ENCODE measurements at regions of chr6 and their contacts with region 1.

Region 1: DNA sequence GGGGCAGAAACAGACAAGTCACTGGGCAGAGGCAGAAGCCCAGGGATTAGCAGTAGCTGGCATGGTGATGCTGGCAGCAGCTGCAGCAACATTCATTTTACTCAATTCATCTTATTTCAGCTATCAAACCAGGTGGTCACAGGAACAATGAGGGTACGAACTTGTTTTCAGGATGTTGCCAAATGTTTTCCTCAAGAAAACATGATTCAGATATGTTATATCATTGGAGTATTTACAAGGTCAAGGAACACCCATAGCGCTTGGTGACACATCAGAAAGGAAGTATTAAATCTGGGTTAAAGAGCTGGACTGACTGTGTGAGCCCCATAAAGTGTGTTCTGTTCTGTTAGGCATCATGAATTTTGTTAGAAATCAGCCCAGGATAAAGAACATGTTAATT is 456.9 kb upstream of the ID4 start:
- DNase-seq: no peak
- ATAC-seq: no peak
- H3K4me3 Mint-ChIP-seq: no peak overlapping the region
- H3K27ac Mint-ChIP-seq: no peak overlapping the region
- H3K4me1 Mint-ChIP-seq: peaks cover 11% of the 10 kb centered on the region
- H3K27me3 Mint-ChIP-seq: peaks cover 12% of the 10 kb centered on the region
- CTCF ChIP-seq: no peak

Region 2: DNA sequence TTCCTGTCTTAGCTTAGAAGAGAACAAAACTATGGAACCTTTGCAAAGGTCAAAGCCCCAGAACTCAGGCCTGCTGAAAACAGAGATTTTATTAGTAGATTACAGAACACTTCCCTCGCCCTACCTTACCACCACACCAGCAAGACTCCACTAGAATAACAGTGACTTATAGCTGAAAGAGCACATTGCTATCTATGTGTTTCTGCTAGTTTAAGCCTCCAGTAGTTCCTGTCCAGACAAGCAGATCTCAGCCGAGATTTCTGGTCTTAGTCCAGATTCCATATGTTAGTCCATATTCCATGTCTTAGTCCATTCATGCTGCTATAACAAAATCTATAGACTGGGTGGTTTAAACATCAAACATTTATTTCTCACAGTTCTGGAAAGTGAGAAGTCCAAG is 44.6 kb after region 1 on chr6:
- CTCF ChIA-PET with region 1: interaction called, 10 read pairs
- POLR2A ChIA-PET with region 1: no interaction called
- DNase-seq: no peak
- ATAC-seq: no peak; the same call in 1 of the 2 replicates
- H3K4me3 Mint-ChIP-seq: no peak overlapping the region
- H3K27ac Mint-ChIP-seq: no peak overlapping the region; the same call in 1 of the 2 replicates
- H3K4me1 Mint-ChIP-seq: peaks cover 9% of the 10 kb centered on the region
- H3K27me3 Mint-ChIP-seq: no peaks in the 10 kb centered on the region
- CTCF ChIP-seq: no peak